ENCODE measurements at regions of chr7 and their contacts with region 1.

Region 1: GRCh38 chr7:73718905-73719805 is at the start of gene STX1A:
- DNase-seq: no peak
- H3K4me3 ChIP-seq: peak within 1 kb of the TSS; percentile 83
- H3K27me3 ChIP-seq: no peaks in the 10 kb centered on the region
- CTCF ChIP-seq: no peak
- polyA plus RNA-seq, gene STX1A: 10.7 and 12.2 TPM in 2 replicates

Region 2: GRCh38 chr7:73701357-73701995 is 17.7 kb before region 1 on chr7:
- CTCF ChIA-PET with region 1: interaction called, 15 read pairs
- POLR2A ChIA-PET with region 1: no interaction called
- DNase-seq: peak; percentile 39
- H3K4me3 ChIP-seq: no peak overlapping the region
- H3K27me3 ChIP-seq: no peaks in the 10 kb centered on the region
- CTCF ChIP-seq: peak; percentile 66

Region 3: GRCh38 chr7:73936967-73937366 is 217.8 kb after region 1 on chr7:
- CTCF ChIA-PET with region 1: no interaction called
- POLR2A ChIA-PET with region 1: no interaction called
- DNase-seq: no peak
- H3K4me3 ChIP-seq: no peak overlapping the region
- H3K27me3 ChIP-seq: no peaks in the 10 kb centered on the region
- CTCF ChIP-seq: no peak